ENCODE measurements at regions of chr12 and their contacts with region 1.

Region 1: GRCh38 chr12:76074701-76075336 is 9.7 kb downstream of the NAP1L1 start:
- ATAC-seq: peak in 1 of 8 experiments; percentile 35
- H3K4me3 ChIP-seq: no peak overlapping the region
- H3K27ac ChIP-seq: no peak overlapping the region
- H3K4me1 ChIP-seq: no peaks in the 10 kb centered on the region

Region 2: DNA sequence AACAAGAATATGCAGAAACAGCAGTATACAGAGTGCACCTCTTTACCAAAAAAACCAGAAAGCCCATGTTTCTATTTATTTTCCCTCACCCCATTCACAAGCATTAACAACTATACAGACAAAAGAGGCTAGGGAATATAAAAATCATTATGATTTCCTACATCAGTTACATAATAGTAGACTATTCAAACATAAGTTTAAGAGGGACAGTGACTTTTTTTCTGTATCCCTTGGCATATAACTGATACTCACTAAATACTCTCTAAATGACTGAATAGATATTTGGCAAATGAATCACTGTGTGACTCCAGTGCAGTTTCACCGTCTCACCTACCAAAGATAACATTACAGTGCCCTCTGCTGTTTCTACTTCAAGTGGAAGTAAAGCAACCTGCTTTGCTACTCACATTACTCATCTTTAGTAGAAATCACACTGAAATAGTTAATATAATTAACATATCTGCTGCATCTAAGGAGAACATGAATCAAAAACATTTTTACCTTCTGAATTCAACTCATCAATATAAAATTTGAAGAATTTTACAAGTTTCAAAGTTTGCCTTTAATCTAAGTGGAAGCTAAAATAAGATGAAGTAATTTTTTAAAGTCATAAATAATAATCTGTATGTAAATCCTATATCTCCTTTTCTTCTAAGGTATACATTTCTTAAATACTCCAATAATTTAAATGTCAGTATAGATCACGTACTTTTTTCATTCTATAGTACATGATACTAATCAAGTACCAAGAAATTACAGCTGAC is 380.9 kb after region 1 on chr12:
- in situ Hi-C with region 1: loop called in 1 of 9 experiments (anchors 25 kb)
- ATAC-seq: peak in 6 of 8 experiments; percentile 50 to 99 (median 82)
- H3K4me3 ChIP-seq: no peak overlapping the region
- H3K27ac ChIP-seq: no peak overlapping the region
- H3K4me1 ChIP-seq: no peaks in the 10 kb centered on the region

Measured in motor neuron (in vitro differentiated cells).